Activated CD4-positive, alpha-beta memory T cell treated with anti-CD3 and anti-CD28 coated beads, Interleukin-2, amount 10 ng/mL, durations not matched to agents 7 days and 5 days (primary cell): ENCODE measurements at regions of chr2 and their contacts with region 1.

Region 1: DNA sequence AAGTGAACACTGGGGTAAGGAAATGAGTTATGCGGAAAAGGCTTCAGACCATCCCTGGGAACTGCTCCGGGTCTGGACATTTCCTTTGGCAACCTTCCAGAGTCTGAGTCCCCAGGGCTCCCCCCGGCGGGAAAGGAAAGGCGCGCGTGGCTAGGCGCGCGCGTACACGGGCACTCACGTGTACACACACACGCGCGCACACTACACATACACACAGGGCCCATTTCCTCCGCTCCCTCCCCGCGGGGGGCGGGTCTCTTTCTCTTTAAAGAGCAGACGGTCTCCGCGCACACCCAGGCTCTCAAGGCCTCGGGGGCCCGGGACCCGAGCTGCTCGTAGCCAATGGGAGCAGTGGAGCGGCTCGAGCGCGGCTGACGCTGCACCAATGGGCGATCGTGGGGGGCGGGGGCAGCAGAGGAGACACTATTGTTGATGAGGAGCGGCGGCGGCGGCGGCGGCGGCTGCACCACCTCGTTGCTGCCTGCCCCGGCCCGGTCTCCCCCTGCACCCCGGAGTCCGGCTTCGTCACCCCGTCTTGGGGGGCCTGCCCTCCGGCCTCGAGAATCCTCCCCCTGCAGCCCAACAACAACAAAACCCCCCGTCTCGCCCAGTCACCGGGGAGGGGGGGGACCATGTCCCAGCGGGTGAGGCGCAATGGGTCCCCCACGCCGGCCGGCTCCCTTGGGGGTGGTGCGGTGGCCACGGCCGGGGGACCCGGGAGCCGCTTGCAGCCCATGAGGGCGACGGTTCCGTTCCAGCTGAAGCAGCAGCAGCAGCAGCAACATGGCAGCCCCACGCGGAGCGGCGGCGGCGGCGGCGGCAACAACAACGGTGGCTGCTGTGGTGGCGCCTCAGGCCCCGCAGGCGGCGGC is at the start of gene FAM117B:
- DNase-seq: peak; percentile 98
- H3K4me3 Mint-ChIP-seq: peak within 1 kb of the TSS; percentile 92
- H3K27ac Mint-ChIP-seq: peak within 1 kb of the TSS; percentile 79
- H3K4me1 Mint-ChIP-seq: peaks cover 40% of the 10 kb centered on the region
- H3K27me3 Mint-ChIP-seq: no peaks in the 10 kb centered on the region
- total RNA-seq, gene FAM117B: 4.3 to 5.2 TPM

Region 2: DNA sequence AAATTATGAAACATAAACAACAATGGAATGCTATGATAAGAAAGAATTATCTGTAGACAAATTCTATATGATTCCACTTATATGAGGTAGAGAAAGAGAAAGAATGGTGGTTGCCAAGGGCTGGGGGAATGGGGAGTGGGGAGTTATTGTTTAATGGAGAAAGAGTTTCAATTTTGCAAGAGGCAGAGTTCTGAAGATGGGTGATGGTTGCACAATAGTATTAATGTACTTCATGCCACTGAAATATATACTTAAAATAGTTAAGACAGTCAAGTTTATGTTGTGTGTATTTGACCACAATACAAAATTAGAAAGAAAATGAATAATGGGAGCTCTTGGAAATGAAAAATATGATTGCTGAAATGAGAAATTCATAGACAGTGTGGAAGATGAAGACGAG is 22.6 kb before region 1 on chr2:
- CTCF ChIA-PET with region 1: no interaction called
- POLR2A ChIA-PET with region 1: no interaction called
- DNase-seq: no peak
- H3K4me3 Mint-ChIP-seq: no peak overlapping the region
- H3K27ac Mint-ChIP-seq: no peak overlapping the region
- H3K4me1 Mint-ChIP-seq: peaks cover 6% of the 10 kb centered on the region
- H3K27me3 Mint-ChIP-seq: no peaks in the 10 kb centered on the region

Region 3: GRCh38 chr2:202700075-202700901 is 65.5 kb after region 1 on chr2:
- CTCF ChIA-PET with region 1: no interaction called
- POLR2A ChIA-PET with region 1: interaction called, 10 read pairs
- DNase-seq: no peak
- H3K4me3 Mint-ChIP-seq: no peak overlapping the region
- H3K27ac Mint-ChIP-seq: no peak overlapping the region
- H3K4me1 Mint-ChIP-seq: peaks cover 17% of the 10 kb centered on the region
- H3K27me3 Mint-ChIP-seq: no peaks in the 10 kb centered on the region

Region 4: GRCh38 chr2:202848813-202849212 is 214.0 kb after region 1 on chr2:
- CTCF ChIA-PET with region 1: no interaction called
- POLR2A ChIA-PET with region 1: no interaction called
- DNase-seq: no peak
- H3K4me3 Mint-ChIP-seq: no peak overlapping the region
- H3K27ac Mint-ChIP-seq: no peak overlapping the region
- H3K4me1 Mint-ChIP-seq: no peaks in the 10 kb centered on the region
- H3K27me3 Mint-ChIP-seq: no peaks in the 10 kb centered on the region

Region 5: GRCh38 chr2:202870431-202871299 is 235.9 kb after region 1 on chr2:
- CTCF ChIA-PET with region 1: interaction called, 7 read pairs
- POLR2A ChIA-PET with region 1: interaction called, 10 read pairs
- DNase-seq: peak; percentile 69
- H3K4me3 Mint-ChIP-seq: peak overlapping the region; percentile 81
- H3K27ac Mint-ChIP-seq: peak overlapping the region; percentile 47
- H3K4me1 Mint-ChIP-seq: peaks cover 12% of the 10 kb centered on the region
- H3K27me3 Mint-ChIP-seq: no peaks in the 10 kb centered on the region